CD14-positive monocyte (primary cell): ENCODE measurements at regions of chr20 and their contacts with region 1.

Region 1: GRCh38 chr20:45293041-45294002 is 13.3 kb upstream of the RBPJL start:
- DNase-seq: peak; percentile 61 to 70 (median 65)
- H3K4me3 ChIP-seq: peak overlapping the region; percentile 16 to 73 (median 24)
- H3K4me3 Mint-ChIP-seq: peak overlapping the region; percentile 76 to 88
- H3K27ac ChIP-seq: no peak overlapping the region
- H3K27ac Mint-ChIP-seq: peak overlapping the region in 1 of 7 donors; percentile 26
- H3K4me1 ChIP-seq: peaks cover 12 to 17% of the 10 kb centered on the region in 2 donors
- H3K4me1 Mint-ChIP-seq: peaks cover 17% of the 10 kb centered on the region
- H3K27me3 ChIP-seq: peaks cover 13 to 28% of the 10 kb centered on the region in 2 donors
- H3K27me3 Mint-ChIP-seq: peaks cover 23 to 35% (median 28%) of the 10 kb centered on the region in 3 donors
- CTCF ChIP-seq: peak; percentile 99

Region 2: GRCh38 chr20:45138561-45139300 is 154.6 kb before region 1 on chr20:
- intact Hi-C with region 1: loop called (anchors 2 to 5 kb)
- DNase-seq: peak; percentile 32 to 65 (median 53)
- H3K4me3 ChIP-seq: no peak overlapping the region
- H3K4me3 Mint-ChIP-seq: no peak overlapping the region
- H3K27ac ChIP-seq: no peak overlapping the region
- H3K27ac Mint-ChIP-seq: no peak overlapping the region
- H3K4me1 ChIP-seq: no peaks in the 10 kb centered on the region
- H3K4me1 Mint-ChIP-seq: no peaks in the 10 kb centered on the region
- H3K27me3 ChIP-seq: peaks cover 0 to 7% of the 10 kb centered on the region in 2 donors
- H3K27me3 Mint-ChIP-seq: peaks cover 8 to 18% (median 10%) of the 10 kb centered on the region in 3 donors
- CTCF ChIP-seq: peak; percentile 86